Naive thymus-derived CD8-positive, alpha-beta T cell (primary cell): ENCODE measurements at regions of chr12 and their contacts with region 1.

Region 1: DNA sequence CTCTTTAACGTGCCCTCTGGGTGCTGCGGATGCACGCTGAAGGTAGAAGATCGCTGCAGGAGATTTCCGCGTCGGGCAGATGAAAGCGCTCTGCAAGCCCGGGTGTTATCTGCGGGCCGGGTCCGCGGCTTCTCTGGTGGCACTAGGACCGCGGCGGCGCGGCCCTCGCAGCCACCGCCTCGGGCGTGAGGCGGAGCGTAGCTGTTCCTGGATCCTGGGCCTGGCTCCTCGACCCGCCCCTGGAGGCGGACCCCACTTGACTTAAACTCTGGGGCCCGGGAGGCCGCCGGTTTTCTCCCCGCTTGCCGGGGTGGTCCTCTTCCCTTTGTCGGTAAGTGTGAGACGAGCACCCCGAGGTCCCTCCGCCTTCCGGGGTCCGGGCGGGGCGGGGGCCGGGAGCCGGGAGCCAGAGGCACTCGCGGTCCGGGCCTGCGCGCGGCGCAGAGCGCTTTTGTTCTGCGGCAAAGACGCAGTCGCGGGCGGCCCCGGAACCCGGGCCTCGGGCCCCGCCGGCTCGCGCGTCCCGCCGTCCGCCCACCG is at the start of gene RESF1:
- DNase-seq: peak; percentile 68 to 92 (median 84)
- ATAC-seq: peak; percentile 76 to 80
- H3K4me3 Mint-ChIP-seq: peak within 1 kb of the TSS; percentile 93 to 99 (median 97)
- H3K27ac Mint-ChIP-seq: peak within 1 kb of the TSS; percentile 94 to 99 (median 97)
- H3K4me1 Mint-ChIP-seq: peaks cover 36 to 80% (median 69%) of the 10 kb centered on the region in 4 donors
- H3K27me3 Mint-ChIP-seq: no peaks in the 10 kb centered on the region
- polyA plus RNA-seq, gene RESF1: 129 to 237 (median 154) TPM

Region 2: DNA sequence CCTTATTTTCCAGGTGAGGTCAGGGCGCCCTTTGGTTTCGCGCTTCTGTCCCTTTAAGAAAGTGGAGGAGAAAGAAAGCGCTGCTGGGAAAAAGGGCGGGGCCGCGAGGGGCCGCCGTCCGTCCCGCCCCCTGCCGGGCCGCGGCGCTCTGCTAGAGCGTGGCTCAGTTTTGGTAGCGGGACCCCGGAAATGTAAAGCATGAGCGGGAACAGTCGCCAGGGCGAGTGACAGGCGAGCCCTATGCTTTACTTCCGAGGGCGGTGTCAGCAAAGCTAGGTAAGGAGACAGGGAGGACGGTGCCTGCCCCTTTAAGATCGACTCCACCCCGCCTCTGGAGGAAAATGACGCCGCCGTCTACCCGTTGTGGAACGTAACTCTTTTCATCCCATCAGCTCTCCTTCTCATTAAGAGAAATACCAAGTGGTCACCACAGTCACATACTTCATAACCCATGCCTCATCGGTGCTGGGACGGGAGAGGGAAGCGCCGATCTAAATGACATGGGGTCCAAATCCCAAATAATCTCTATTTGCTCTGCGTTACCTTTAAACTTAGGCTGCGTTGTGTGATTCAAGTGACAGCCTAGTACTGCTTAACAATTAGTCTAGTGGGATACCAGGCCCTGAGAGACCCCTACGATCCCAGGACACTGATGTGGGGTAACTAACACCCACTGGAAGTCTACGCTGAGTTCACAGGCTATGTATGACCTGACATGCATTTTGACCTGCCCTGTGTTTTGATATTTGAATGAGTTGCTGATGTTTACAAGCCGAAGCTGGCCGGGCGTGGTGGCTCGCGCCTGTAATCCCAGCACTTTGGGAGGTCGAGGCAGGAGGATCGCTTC is 299.9 kb before region 1 on chr12 and contains the start of gene ETFBKMT:
- POLR2A ChIA-PET with region 1: interaction called, 24 read pairs
- DNase-seq: peak; percentile 85 to 96 (median 92)
- ATAC-seq: peak; percentile 97 to 99
- H3K4me3 Mint-ChIP-seq: peak within 1 kb of the TSS; percentile 88 to 99 (median 97)
- H3K27ac Mint-ChIP-seq: peak within 1 kb of the TSS; percentile 97 to 100 (median 99)
- H3K4me1 Mint-ChIP-seq: peaks cover 6 to 33% (median 13%) of the 10 kb centered on the region in 4 donors
- H3K27me3 Mint-ChIP-seq: no peaks in the 10 kb centered on the region
- polyA plus RNA-seq, gene ETFBKMT: 0.34 to 1.8 (median 0.62) TPM

Region 3: DNA sequence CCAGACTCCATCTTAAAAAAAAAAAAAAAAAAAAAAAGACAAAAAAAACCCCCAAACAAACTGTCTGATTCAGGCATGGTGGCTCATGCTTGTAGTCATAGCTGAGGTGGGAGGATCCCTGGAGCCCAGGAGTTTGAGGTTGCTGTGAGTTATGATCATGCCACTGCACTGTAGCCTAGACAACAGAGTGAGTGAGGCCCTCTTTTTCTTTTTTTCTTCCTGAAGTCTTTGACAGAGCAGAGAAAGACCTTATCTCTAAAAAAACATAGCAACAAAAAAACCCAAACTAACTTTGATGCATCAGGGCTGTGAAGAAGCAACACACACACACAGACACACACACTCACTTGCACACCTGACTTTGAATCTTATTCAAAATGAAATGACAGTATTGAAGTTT is 222.8 kb before region 1 on chr12:
- POLR2A ChIA-PET with region 1: interaction called, 13 read pairs
- DNase-seq: peak; percentile 30 to 90 (median 74)
- ATAC-seq: peak; percentile 90 to 95
- H3K4me3 Mint-ChIP-seq: peak overlapping the region; percentile 9 to 70 (median 50)
- H3K27ac Mint-ChIP-seq: peak overlapping the region; percentile 74 to 97 (median 94)
- H3K4me1 Mint-ChIP-seq: peaks cover 19 to 70% (median 55%) of the 10 kb centered on the region in 4 donors
- H3K27me3 Mint-ChIP-seq: no peaks in the 10 kb centered on the region

Region 4: DNA sequence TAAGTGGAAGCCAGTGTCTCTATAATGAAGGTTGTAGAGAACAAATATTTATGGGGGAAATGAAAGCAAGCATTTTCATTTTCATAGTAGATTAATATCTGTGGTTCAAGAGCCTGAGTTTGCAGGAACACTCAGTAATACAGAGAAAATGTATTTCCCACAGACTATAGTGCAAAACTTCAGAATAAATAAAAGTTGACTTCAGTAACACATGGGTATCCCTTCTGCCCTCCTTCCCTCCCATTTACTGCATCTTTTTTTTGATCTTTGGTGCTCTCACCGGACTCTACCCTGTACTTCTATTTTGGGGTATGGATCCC is 155.1 kb before region 1 on chr12:
- POLR2A ChIA-PET with region 1: interaction called, 96 read pairs
- DNase-seq: no peak
- ATAC-seq: peak in 1 of 2 donors; percentile 28
- H3K4me3 Mint-ChIP-seq: peak overlapping the region; percentile 85 to 100 (median 94)
- H3K27ac Mint-ChIP-seq: peak overlapping the region; percentile 91 to 99 (median 95)
- H3K4me1 Mint-ChIP-seq: peaks cover 28 to 64% (median 58%) of the 10 kb centered on the region in 4 donors
- H3K27me3 Mint-ChIP-seq: no peaks in the 10 kb centered on the region

Region 5: GRCh38 chr12:31890295-31891285 is 68.6 kb before region 1 on chr12:
- POLR2A ChIA-PET with region 1: interaction called, 112 read pairs
- DNase-seq: peak in 3 of 10 donors; percentile 64 to 76 (median 72)
- ATAC-seq: peak; percentile 77 to 98
- H3K4me3 Mint-ChIP-seq: peak overlapping the region in 9 of 10 donors; percentile 57 to 81 (median 72)
- H3K27ac Mint-ChIP-seq: peak overlapping the region; percentile 51 to 96 (median 91)
- H3K4me1 Mint-ChIP-seq: peaks cover 17 to 81% (median 58%) of the 10 kb centered on the region in 4 donors
- H3K27me3 Mint-ChIP-seq: no peaks in the 10 kb centered on the region

Region 6: GRCh38 chr12:31928246-31929026 is 30.8 kb before region 1 on chr12:
- POLR2A ChIA-PET with region 1: interaction called, 31 read pairs
- DNase-seq: peak in 6 of 10 donors; percentile 7 to 64 (median 30)
- ATAC-seq: peak; percentile 90 to 91
- H3K4me3 Mint-ChIP-seq: peak overlapping the region; percentile 76 to 95 (median 88)
- H3K27ac Mint-ChIP-seq: peak overlapping the region; percentile 92 to 99 (median 98)
- H3K4me1 Mint-ChIP-seq: peaks cover 21 to 63% (median 55%) of the 10 kb centered on the region in 4 donors
- H3K27me3 Mint-ChIP-seq: no peaks in the 10 kb centered on the region

Region 7: DNA sequence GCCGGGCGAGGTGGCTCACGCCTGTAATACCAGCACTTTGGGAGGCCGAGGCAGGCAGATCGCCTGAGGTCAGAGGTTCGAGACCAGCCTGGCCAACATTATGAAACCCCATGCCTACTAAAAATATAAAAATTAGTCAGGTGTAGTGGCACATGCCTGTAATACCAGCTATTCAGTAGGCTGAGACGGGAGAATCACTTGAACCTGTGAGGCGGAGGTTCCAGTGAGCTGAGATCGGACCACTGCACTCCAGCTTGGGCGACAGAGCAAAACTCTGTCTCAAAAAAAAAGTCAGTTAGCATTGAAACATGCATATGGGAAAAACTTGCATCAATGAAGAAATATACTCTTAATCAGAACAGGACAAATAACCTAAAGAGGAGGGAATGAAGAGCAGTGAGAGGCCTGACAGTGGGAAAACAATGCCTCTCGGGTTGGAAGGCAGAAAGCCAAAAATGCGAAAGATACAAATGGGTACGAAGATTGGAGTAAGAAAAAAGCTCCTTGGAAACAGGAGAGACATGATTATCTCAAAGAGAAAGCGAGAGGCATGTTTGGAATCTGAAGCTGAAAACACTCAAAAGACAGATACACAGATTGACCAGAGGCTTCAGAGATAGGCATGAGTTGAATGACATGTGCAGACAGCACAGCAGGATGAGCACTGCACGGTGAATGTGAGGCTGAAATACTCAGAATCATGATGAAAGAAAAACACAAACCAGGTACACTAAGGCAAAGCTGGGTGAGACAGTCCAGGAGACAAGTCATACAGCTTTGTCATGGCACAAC is 30.5 kb after region 1 on chr12:
- POLR2A ChIA-PET with region 1: interaction called, 12 read pairs
- DNase-seq: no peak
- ATAC-seq: no peak
- H3K4me3 Mint-ChIP-seq: peak overlapping the region in 2 of 10 donors; percentile 5 to 55
- H3K27ac Mint-ChIP-seq: peak overlapping the region in 7 of 10 donors; percentile 23 to 80 (median 66)
- H3K4me1 Mint-ChIP-seq: peaks cover 9 to 38% (median 28%) of the 10 kb centered on the region in 4 donors
- H3K27me3 Mint-ChIP-seq: no peaks in the 10 kb centered on the region